ENCODE measurements at regions of chr2 and their contacts with region 1.

Region 1: GRCh38 chr2:201231781-201232466 is 28.4 kb upstream of the CASP8 start:
- DNase-seq: peak; percentile 75 to 95 (median 91)
- ATAC-seq: peak; percentile 79
- H3K4me3 ChIP-seq: peak overlapping the region; percentile 70
- H3K4me3 Mint-ChIP-seq: peak overlapping the region; percentile 66 to 99 (median 96)
- H3K27ac ChIP-seq: no peak overlapping the region
- H3K27ac Mint-ChIP-seq: peak overlapping the region; percentile 85 to 98 (median 95)
- H3K4me1 ChIP-seq: peaks cover 27 to 32% of the 10 kb centered on the region in 2 donors
- H3K4me1 Mint-ChIP-seq: peaks cover 28 to 77% (median 67%) of the 10 kb centered on the region in 7 donors
- H3K27me3 ChIP-seq: no peaks in the 10 kb centered on the region
- H3K27me3 Mint-ChIP-seq: no peaks in the 10 kb centered on the region

Region 2: GRCh38 chr2:200811336-200812121 is 420.4 kb before region 1 on chr2 and contains the start of gene BZW1:
- CTCF ChIA-PET with region 1: no interaction called
- POLR2A ChIA-PET with region 1: interaction called, 4 read pairs
- intact Hi-C with region 1: loop called (anchors 1 to 5 kb)
- DNase-seq: peak; percentile 92 to 99 (median 98)
- ATAC-seq: peak; percentile 91
- H3K4me3 ChIP-seq: peak within 1 kb of the TSS; percentile 89
- H3K4me3 Mint-ChIP-seq: peak within 1 kb of the TSS; percentile 89 to 99 (median 98)
- H3K27ac ChIP-seq: peak within 1 kb of the TSS; percentile 99
- H3K27ac Mint-ChIP-seq: peak within 1 kb of the TSS; percentile 91 to 99 (median 98)
- H3K4me1 ChIP-seq: peaks cover 19 to 24% of the 10 kb centered on the region in 2 donors
- H3K4me1 Mint-ChIP-seq: peaks cover 30 to 56% (median 48%) of the 10 kb centered on the region in 7 donors
- H3K27me3 ChIP-seq: no peaks in the 10 kb centered on the region
- H3K27me3 Mint-ChIP-seq: peaks cover 0 to 2% (median 0%) of the 10 kb centered on the region in 5 donors
- total RNA-seq, gene BZW1: 127 to 246 (median 207) TPM

Region 3: DNA sequence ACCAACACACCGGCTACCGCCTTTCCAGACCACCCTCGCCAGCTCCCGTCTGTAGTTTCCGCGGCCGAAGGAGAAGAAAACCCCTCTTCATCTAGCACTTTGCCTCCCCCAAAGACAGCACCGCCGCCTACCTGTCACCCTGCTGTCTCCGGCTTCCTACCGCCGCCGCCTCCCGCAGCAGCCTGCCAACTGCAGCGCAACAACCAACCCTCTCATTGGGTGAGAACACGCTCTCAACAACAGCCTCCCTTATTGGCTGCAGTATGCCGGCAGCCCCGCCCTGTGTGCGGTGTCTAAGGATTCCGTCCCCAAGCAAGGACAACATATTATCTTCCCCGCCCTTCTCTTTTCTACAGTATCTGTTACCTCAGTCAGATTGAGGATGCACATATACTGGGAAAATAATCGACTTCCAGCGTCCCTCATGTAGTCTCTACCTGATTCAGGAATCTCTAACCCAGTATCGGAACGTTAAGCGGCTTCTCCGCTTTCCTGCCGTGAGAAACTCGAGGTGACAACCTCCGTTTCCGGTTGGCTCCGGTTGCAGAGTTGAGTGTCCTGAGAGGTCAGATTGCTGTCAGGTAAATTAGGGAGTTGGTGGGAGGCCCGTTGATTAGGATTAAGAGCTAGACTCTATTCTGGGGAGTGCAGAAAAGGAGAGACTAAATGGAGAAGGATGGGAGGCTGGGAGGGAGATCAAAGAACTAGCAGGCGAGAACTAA is 160.3 kb before region 1 on chr2 and contains the starts of genes HYCC2 and NDUFB3:
- CTCF ChIA-PET with region 1: interaction called, 5 read pairs
- POLR2A ChIA-PET with region 1: interaction called, 4 read pairs
- intact Hi-C with region 1: loop called (anchors 1 kb)
- DNase-seq: peak; percentile 79 to 96 (median 95)
- ATAC-seq: peak; percentile 98
- H3K4me3 ChIP-seq: peak within 1 kb of the TSS; percentile 92
- H3K4me3 Mint-ChIP-seq: peak within 1 kb of the TSS; percentile 91 to 99 (median 94)
- H3K27ac ChIP-seq: peak within 1 kb of the TSS; percentile 83
- H3K27ac Mint-ChIP-seq: peak within 1 kb of the TSS; percentile 86 to 99 (median 95)
- H3K4me1 ChIP-seq: peaks cover 32 to 36% of the 10 kb centered on the region in 2 donors
- H3K4me1 Mint-ChIP-seq: peaks cover 31 to 74% (median 55%) of the 10 kb centered on the region in 7 donors
- H3K27me3 ChIP-seq: no peaks in the 10 kb centered on the region
- H3K27me3 Mint-ChIP-seq: no peaks in the 10 kb centered on the region
- total RNA-seq, gene HYCC2: 34.8 to 38.3 (median 36.1) TPM
- total RNA-seq, gene NDUFB3: 18.3 to 109 (median 38.3) TPM

Region 4: DNA sequence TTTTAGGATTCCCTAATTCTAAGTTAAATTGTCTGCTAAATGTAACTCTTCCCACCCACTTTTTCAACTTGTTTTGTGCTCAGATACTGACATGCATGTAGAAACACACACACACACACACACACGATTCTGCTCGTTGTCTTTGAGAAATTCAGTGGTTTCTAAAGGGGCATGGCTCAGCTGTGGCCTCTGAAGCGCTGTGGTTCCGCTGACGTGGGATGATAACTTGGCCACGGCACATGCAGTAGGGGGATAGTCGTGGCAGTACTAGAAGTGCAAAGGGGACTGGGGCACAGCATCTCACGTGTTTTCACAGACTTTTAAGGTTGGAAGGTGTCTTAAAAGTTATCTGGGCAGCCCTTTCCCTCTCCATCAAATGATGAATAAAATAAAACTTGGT is 30.6 kb before region 1 on chr2:
- CTCF ChIA-PET with region 1: interaction called, 70 read pairs
- POLR2A ChIA-PET with region 1: interaction called, 5 read pairs
- intact Hi-C with region 1: no loop called
- DNase-seq: no peak
- ATAC-seq: no peak
- H3K4me3 ChIP-seq: no peak overlapping the region
- H3K4me3 Mint-ChIP-seq: peak overlapping the region in 1 of 10 donors; percentile 25
- H3K27ac ChIP-seq: no peak overlapping the region
- H3K27ac Mint-ChIP-seq: peak overlapping the region in 7 of 9 donors; percentile 71 to 87 (median 78)
- H3K4me1 ChIP-seq: peaks cover 0 to 22% of the 10 kb centered on the region in 2 donors
- H3K4me1 Mint-ChIP-seq: peaks cover 22 to 71% (median 66%) of the 10 kb centered on the region in 7 donors
- H3K27me3 ChIP-seq: no peaks in the 10 kb centered on the region
- H3K27me3 Mint-ChIP-seq: no peaks in the 10 kb centered on the region

Region 5: GRCh38 chr2:201275990-201276389 is 44.1 kb after region 1 on chr2:
- CTCF ChIA-PET with region 1: interaction called, 11 read pairs
- POLR2A ChIA-PET with region 1: interaction called, 3 read pairs
- intact Hi-C with region 1: loop called (anchors 1 to 5 kb)
- DNase-seq: no peak
- ATAC-seq: peak; percentile 40
- H3K4me3 ChIP-seq: no peak overlapping the region
- H3K4me3 Mint-ChIP-seq: no peak overlapping the region
- H3K27ac ChIP-seq: no peak overlapping the region
- H3K27ac Mint-ChIP-seq: peak overlapping the region in 8 of 9 donors; percentile 41 to 82 (median 64)
- H3K4me1 ChIP-seq: peaks cover 0 to 22% of the 10 kb centered on the region in 2 donors
- H3K4me1 Mint-ChIP-seq: peaks cover 35 to 73% (median 59%) of the 10 kb centered on the region in 7 donors
- H3K27me3 ChIP-seq: no peaks in the 10 kb centered on the region
- H3K27me3 Mint-ChIP-seq: no peaks in the 10 kb centered on the region

Region 6: GRCh38 chr2:201860636-201861066 is 628.7 kb after region 1 on chr2:
- CTCF ChIA-PET with region 1: no interaction called
- POLR2A ChIA-PET with region 1: no interaction called
- intact Hi-C with region 1: loop called in 1 of 2 experiments (anchors 2 kb)
- DNase-seq: peak in 8 of 9 donors; percentile 15 to 60 (median 36)
- ATAC-seq: peak; percentile 75
- H3K4me3 ChIP-seq: no peak overlapping the region
- H3K4me3 Mint-ChIP-seq: peak overlapping the region in 6 of 10 donors; percentile 15 to 57 (median 26)
- H3K27ac ChIP-seq: no peak overlapping the region
- H3K27ac Mint-ChIP-seq: no peak overlapping the region
- H3K4me1 ChIP-seq: peaks cover 0 to 8% of the 10 kb centered on the region in 2 donors
- H3K4me1 Mint-ChIP-seq: peaks cover 13 to 24% (median 20%) of the 10 kb centered on the region in 7 donors
- H3K27me3 ChIP-seq: no peaks in the 10 kb centered on the region
- H3K27me3 Mint-ChIP-seq: peaks cover 7 to 47% (median 30%) of the 10 kb centered on the region in 5 donors